Activated T-helper 2 cell treated with anti-CD3 and anti-CD28 coated beads, Interferon-gamma antibody, Interleukin-2, Interleukin-4, amounts not matched to agents 10 μg/mL and 5 μg/mL and 100 μg/mL, durations not matched to agents 14 hours and 24 hours and 36 hours (primary cell): ENCODE measurements at regions of chr2 and their contacts with region 1.

Region 1: DNA sequence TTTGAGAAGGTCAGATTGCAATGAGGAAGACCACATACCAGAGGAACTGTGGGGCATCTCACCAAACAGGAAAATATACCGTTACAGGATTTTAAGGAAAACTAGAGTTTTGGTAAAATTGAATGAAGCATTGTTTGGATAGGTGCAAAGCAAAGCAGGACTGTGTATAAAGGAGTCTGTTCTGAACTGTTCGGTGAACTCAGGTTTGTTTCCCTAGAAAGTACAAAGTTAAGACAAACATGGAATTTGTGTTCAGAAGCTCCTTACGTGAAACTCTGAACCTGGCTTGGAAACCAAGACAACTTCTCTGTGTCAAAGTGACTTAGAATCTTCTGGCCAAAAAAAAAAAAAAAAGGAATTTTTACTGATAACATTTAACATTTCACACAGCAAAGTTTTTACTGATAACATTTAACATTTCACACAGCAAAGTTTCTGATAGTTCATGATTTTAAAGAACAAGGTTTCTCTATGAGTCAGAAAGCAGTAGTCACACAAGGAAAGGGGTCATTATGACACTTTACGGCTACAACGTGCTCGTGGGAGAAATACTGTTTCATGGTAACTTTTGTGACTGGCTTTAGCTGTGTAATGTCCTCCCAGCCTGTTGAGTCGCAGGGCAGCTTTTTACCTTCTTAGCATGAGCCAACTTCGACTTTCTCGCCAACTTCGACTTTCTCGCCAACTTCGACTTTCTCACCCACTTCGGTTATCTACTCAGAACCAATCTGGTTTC is 21.2 kb upstream of the TET3 start:
- DNase-seq: peak; percentile 20
- H3K4me3 Mint-ChIP-seq: peak overlapping the region; percentile 27
- H3K27ac Mint-ChIP-seq: peak overlapping the region; percentile 88
- H3K4me1 Mint-ChIP-seq: peaks cover 43% of the 10 kb centered on the region
- H3K27me3 Mint-ChIP-seq: no peaks in the 10 kb centered on the region

Region 2: GRCh38 chr2:73931531-73932500 is 31.7 kb before region 1 on chr2:
- intact Hi-C with region 1: loop called (anchors 2 kb)
- DNase-seq: no peak
- H3K4me3 Mint-ChIP-seq: peak overlapping the region; percentile 17
- H3K27ac Mint-ChIP-seq: peak overlapping the region; percentile 81
- H3K4me1 Mint-ChIP-seq: peaks cover 65% of the 10 kb centered on the region
- H3K27me3 Mint-ChIP-seq: no peaks in the 10 kb centered on the region

Region 3: DNA sequence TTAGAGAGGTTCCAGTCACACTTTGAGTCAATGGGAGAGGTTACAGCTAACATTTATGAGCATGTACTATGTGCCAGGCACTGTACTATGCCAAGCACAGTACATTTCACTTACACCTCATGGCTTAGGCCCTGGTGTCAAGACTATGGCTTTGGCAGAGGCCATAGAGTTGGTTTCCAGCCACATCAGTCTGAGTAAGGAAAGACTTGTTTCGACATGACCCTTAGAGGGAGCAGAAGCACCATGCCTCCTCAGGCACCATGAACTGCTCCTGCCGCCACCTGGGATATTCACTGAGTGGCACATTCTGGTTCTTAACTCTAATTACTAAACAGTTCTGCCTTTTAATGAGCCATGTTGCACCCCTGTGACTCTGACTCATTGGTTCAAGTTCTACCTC is 24.1 kb before region 1 on chr2:
- intact Hi-C with region 1: loop called (anchors 2 kb)
- DNase-seq: no peak
- H3K4me3 Mint-ChIP-seq: no peak overlapping the region
- H3K27ac Mint-ChIP-seq: no peak overlapping the region
- H3K4me1 Mint-ChIP-seq: peaks cover 62% of the 10 kb centered on the region
- H3K27me3 Mint-ChIP-seq: no peaks in the 10 kb centered on the region

Region 4: DNA sequence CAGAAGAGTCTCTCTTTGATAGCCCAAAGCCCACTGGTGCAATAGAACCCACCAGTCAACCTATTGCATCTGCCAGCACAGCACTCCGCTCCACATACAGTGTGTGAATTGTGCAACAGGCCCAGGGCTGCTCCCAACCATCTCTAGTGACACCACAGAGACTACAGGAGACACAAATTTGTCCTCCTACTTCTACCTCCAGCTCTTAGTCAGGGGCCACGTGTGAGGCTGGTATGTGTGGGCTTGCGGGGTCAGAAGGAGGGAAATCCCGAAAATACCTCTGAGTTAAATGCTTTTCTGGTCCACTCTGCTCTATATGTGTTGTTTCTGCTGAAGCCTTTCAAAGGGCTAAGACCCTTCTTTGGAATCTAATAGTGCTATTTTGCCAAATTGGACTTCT is 18.8 kb before region 1 on chr2:
- intact Hi-C with region 1: loop called (anchors 2 kb)
- DNase-seq: no peak
- H3K4me3 Mint-ChIP-seq: no peak overlapping the region
- H3K27ac Mint-ChIP-seq: peak overlapping the region; percentile 24
- H3K4me1 Mint-ChIP-seq: peaks cover 62% of the 10 kb centered on the region
- H3K27me3 Mint-ChIP-seq: no peaks in the 10 kb centered on the region

Region 5: GRCh38 chr2:73979686-73980085 is 16.1 kb after region 1 on chr2:
- intact Hi-C with region 1: loop called (anchors 1 kb)
- DNase-seq: no peak
- H3K4me3 Mint-ChIP-seq: peak overlapping the region; percentile 73
- H3K27ac Mint-ChIP-seq: peak overlapping the region; percentile 81
- H3K4me1 Mint-ChIP-seq: peaks cover 60% of the 10 kb centered on the region
- H3K27me3 Mint-ChIP-seq: no peaks in the 10 kb centered on the region

Region 6: DNA sequence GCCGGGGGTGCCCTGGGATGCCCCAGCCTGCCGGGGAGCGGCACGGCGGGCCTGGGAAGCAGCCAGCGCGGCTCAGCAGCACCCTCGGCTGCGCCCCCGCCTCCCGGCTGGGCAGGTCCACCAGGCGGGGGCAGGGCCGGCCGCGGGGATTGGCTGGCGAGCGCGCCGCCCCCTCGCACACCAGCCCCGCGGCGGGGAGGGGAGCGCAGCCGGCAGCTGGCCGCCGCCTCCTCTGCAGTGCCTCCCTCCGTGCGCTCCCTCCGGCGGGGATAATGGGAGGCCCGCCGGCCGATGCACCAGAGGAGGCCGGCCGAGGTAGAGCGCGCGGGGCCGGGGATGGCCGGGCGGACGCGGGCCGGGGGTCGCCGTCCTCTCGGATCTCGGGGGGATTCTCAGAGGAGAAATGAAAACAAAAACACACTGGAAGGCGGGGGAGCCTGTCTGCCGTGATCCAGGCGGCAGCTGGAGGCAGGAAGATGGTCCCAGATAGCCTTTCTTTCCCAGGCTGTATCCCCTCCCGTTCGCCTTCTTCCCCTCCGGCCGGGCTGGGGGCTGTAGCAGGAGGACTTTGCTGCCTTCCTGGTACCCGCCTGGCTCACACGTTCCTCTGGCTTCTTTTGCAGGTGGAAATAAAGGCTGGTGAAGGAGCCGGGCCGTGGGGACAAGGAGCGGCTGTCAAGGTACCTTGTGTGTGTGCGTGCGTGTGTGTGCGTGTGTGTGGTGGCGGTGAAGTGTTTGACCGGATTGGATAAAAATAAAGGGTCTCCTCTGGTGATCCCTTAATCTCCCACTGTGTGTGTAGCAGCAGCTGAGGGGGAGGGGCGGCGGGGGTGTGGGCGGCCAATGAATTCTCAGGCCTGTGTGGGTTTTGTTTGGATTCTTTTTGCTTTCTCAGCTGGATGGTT is 39.2 kb after region 1 on chr2:
- intact Hi-C with region 1: loop called (anchors 5 kb)
- DNase-seq: peak; percentile 76
- H3K4me3 Mint-ChIP-seq: peak overlapping the region; percentile 79
- H3K27ac Mint-ChIP-seq: no peak overlapping the region
- H3K4me1 Mint-ChIP-seq: peaks cover 69% of the 10 kb centered on the region
- H3K27me3 Mint-ChIP-seq: no peaks in the 10 kb centered on the region